A673 (cell line): ENCODE measurements at regions of chr19 and their contacts with region 1.

Region 1: DNA sequence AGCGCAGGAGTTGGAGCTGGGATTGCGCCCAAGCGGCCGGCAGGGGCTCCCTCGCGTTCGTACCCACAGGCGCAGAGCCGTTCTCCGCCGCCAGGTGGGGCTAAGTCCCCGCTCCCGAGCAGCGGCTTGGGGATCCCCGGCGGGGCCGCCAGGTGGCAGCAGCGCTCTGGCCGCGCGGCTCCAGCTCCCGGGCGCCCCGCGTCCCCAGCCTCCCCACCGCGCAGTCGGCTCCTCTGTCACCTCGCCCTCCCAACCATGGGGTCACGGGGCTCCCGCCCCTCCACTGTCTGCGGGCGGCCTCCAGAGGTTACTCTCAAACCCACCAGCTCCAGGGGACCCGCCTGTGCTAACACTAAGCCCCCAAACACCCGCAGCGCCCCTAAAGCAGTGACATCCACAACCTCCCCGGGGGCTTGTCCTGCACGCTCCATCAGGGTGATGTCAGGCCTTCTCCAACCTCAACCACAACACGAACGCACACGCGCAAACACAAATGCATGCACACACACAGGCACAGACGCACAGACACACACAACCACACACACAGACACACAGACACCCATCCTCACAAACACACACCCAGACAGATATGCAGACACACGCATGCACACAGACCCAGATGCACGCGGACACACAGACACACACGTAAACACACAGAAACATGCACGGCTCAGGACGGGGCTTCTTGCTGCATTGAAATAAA is 18.4 kb upstream of the KCTD15 start:
- DNase-seq: peak; percentile 84
- H3K4me3 ChIP-seq: peak overlapping the region; percentile 35
- H3K27ac ChIP-seq: no peak overlapping the region
- H3K4me1 ChIP-seq: peaks cover 6% of the 10 kb centered on the region
- H3K27me3 ChIP-seq: no peaks in the 10 kb centered on the region
- CTCF ChIP-seq: peak; percentile 99

Region 2: DNA sequence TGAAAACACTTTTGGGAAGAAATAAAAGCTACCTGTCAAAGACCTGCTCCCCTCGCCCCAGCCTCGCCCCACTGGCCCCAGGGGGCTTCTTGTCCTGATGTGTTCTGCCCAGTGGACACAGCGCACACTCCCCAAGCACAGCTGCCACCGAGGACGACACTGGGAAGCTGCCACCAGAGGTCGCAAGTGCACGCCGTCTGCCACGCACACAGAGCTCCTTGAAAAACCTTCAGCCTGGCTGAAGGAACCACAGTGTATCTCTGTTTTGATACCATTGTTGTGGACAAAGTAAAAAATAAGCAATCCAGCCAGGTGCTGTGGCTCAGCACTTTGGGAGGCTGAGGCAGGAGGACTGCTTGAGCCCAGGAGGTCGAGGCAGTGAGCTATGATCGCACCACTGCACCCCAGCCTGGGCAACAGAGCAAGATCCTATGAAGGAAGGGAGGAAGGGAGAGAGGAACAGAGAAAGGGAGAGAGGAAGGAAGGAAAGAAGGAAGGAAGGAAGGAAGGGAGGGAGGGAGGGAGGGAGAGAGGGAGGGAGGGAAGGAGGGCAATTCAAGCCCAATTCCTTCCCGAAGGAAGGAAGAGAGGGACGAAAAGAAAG is 347.5 kb before region 1 on chr19:
- CTCF ChIA-PET with region 1: interaction called, 11 read pairs
- POLR2A ChIA-PET with region 1: no interaction called
- intact Hi-C with region 1: no loop called
- DNase-seq: peak; percentile 81
- H3K4me3 ChIP-seq: no peak overlapping the region
- H3K27ac ChIP-seq: no peak overlapping the region
- H3K4me1 ChIP-seq: peaks cover 16% of the 10 kb centered on the region
- H3K27me3 ChIP-seq: no peaks in the 10 kb centered on the region
- CTCF ChIP-seq: peak; percentile 94

Region 3: DNA sequence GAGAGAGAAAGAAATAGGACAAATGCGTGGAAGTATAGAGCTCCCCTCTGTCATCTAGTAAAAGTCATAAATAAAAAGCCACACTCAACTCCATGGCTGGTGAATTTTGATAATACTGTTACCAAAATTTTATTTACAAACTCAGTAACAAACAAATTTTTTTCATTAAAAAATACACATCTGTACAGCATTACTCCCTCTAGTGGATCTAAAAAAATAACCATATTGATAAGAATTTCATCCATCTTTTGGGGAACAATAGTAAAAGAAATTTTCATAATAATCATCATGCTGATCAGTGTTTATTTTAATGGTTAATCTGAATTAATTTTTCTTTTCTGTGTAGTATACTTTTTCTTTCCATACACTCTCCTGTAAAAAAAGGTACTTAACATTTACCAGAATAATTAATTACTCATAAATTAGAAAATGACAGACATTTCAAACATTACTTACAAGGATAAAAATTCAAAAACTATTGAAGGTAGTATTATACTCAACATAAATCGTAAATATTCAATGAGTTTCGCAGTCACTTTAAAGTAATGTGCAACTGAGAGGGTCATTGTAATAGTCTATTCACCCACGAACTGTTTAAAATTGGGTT is 220.6 kb after region 1 on chr19:
- CTCF ChIA-PET with region 1: interaction called, 18 read pairs
- POLR2A ChIA-PET with region 1: no interaction called
- intact Hi-C with region 1: loop called (anchors 2 kb)
- DNase-seq: peak; percentile 12
- H3K4me3 ChIP-seq: no peak overlapping the region
- H3K27ac ChIP-seq: no peak overlapping the region
- H3K4me1 ChIP-seq: no peaks in the 10 kb centered on the region
- H3K27me3 ChIP-seq: peaks cover 18% of the 10 kb centered on the region
- CTCF ChIP-seq: peak; percentile 58

Region 4: DNA sequence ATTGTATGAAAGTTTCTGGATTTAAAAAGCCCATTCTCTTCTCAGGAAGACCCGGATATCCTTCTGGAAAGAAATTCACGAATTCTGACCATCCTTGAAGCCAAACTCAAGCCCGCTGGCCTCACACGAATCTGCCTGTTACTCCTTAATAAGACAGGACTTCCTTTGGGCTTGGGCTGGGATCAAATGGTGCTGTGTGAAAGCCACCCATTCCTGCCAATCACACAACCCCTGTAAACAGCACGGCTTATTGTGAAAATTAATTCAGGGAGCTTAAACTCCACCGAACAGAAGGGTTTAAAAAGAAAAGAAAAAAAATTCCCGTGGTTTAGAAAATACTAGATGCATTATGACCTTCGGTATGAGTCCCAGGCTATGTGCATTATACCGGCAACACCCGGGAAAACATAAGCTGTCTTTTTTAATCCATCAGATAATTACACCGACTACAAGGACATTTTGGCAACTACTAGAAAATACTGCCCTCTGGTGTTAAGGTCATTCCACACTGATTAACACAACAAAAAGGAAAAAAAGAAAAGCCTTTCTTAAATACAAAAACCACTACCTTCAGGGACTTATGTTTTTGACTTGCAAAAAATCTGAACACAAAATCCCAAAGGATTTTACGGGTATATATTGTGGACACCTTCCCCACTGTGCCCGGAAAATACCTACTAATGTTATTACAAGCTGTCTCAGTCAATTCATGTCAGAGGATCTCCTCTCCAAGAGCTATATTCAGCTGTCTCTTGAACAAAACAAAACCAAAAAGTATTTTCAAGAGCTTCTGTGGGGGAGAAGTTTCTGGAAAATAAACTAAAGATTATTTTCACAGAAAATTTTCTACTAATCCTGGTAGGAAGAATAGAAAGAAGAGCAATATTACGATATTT is 318.0 kb after region 1 on chr19:
- CTCF ChIA-PET with region 1: interaction called, 29 read pairs
- POLR2A ChIA-PET with region 1: no interaction called
- intact Hi-C with region 1: loop called (anchors 1 kb)
- DNase-seq: peak; percentile 74
- H3K4me3 ChIP-seq: no peak overlapping the region
- H3K27ac ChIP-seq: no peak overlapping the region
- H3K4me1 ChIP-seq: no peaks in the 10 kb centered on the region
- H3K27me3 ChIP-seq: no peaks in the 10 kb centered on the region
- CTCF ChIP-seq: peak; percentile 71

Region 5: GRCh38 chr19:34145741-34146202 is 367.5 kb after region 1 on chr19:
- CTCF ChIA-PET with region 1: interaction called, 15 read pairs
- POLR2A ChIA-PET with region 1: no interaction called
- intact Hi-C with region 1: loop called (anchors 5 kb)
- DNase-seq: peak; percentile 72
- H3K4me3 ChIP-seq: no peak overlapping the region
- H3K27ac ChIP-seq: no peak overlapping the region
- H3K4me1 ChIP-seq: no peaks in the 10 kb centered on the region
- H3K27me3 ChIP-seq: no peaks in the 10 kb centered on the region
- CTCF ChIP-seq: peak; percentile 87

Region 6: GRCh38 chr19:34184880-34185491 is 406.7 kb after region 1 on chr19:
- CTCF ChIA-PET with region 1: no interaction called
- POLR2A ChIA-PET with region 1: no interaction called
- intact Hi-C with region 1: no loop called
- DNase-seq: no peak
- H3K4me3 ChIP-seq: no peak overlapping the region
- H3K27ac ChIP-seq: peak overlapping the region; percentile 26
- H3K4me1 ChIP-seq: peaks cover 40% of the 10 kb centered on the region
- H3K27me3 ChIP-seq: no peaks in the 10 kb centered on the region
- CTCF ChIP-seq: no peak

Region 7: GRCh38 chr19:34712395-34713261 is 934.4 kb after region 1 on chr19:
- CTCF ChIA-PET with region 1: no interaction called
- POLR2A ChIA-PET with region 1: no interaction called
- intact Hi-C with region 1: loop called (anchors 10 kb)
- DNase-seq: peak; percentile 85
- H3K4me3 ChIP-seq: no peak overlapping the region
- H3K27ac ChIP-seq: no peak overlapping the region
- H3K4me1 ChIP-seq: no peaks in the 10 kb centered on the region
- H3K27me3 ChIP-seq: no peaks in the 10 kb centered on the region
- CTCF ChIP-seq: peak; percentile 67